ENCODE measurements at regions of chr10 and their contacts with region 1.

Region 1: GRCh38 chr10:119445311-119445934 is 97.1 kb downstream of the RGS10 start:
- DNase-seq: peak; percentile 93
- H3K4me3 ChIP-seq: no peak overlapping the region
- H3K27ac ChIP-seq: no peak overlapping the region
- H3K4me1 ChIP-seq: peaks cover 0 to 41% (median 27%) of the 10 kb centered on the region in 4 donors
- H3K27me3 ChIP-seq: no peaks in the 10 kb centered on the region
- CTCF ChIP-seq: peak; percentile 77 to 99 (median 90)
- EP300 ChIP-seq: no peak
- POLR2A ChIP-seq: no peak

Region 2: DNA sequence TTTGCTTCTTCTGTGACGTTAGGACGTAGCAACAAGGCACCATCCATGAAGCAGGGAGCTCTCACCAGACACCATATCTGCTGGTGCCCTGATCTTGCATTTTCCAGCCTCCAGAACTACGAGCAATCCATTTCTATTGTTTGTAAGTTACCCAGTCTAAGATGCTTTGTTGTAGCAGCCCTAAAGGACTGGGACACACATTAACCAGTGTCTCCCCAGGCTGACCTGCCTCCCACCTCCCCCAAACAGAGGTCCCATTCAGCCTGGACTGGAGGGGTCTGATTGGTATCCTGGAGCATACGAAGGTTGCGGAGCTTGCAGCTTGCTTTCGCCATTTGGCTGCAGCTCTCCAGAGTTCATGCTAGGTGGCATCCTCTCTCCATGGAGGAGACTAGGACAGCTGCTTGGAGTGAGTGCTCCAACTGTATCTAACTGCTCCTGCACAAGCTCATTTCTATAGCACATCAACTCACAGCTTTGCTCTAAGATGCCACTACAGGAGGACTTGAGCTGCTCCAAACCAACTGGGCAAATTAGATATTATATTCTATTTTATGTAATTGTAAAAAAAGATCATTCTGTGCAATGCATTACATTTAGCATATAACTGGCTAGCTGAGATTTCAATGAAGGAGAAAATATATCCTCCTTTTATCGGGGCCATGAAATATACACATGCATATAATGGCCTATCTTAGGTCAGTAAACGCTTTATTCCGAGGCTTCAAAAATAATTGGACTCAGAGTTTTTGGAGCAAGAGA is 246.0 kb before region 1 on chr10:
- intact Hi-C with region 1: loop called (anchors 1 kb)
- DNase-seq: peak; percentile 88
- H3K4me3 ChIP-seq: no peak overlapping the region
- H3K27ac ChIP-seq: no peak overlapping the region
- H3K4me1 ChIP-seq: peaks cover 0 to 3% (median 0%) of the 10 kb centered on the region in 4 donors
- H3K27me3 ChIP-seq: no peaks in the 10 kb centered on the region
- CTCF ChIP-seq: peak; percentile 68 to 83 (median 78)
- EP300 ChIP-seq: no peak
- POLR2A ChIP-seq: no peak

Region 3: DNA sequence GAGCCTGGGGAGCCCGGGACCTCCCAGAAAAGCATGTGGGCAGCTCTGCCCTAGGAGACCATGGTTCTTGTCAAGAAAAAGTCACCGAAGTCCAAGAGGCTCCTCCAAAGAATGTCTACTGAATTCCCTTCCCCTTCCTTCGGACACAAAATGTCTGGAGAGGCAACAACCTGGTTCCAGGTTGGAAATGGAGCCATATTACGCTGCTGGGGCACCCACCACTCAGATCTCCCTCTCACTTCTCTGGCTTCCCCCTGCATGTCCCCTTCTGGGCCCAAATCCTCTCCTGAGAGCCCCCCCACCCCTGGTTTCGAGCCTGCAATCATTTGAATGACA is 44.5 kb after region 1 on chr10:
- intact Hi-C with region 1: loop called (anchors 5 kb)
- DNase-seq: no peak
- H3K4me3 ChIP-seq: peak overlapping the region in 2 of 4 donors; percentile 39 to 40
- H3K27ac ChIP-seq: peak overlapping the region in 2 of 4 donors; percentile 22 to 25
- H3K4me1 ChIP-seq: peaks cover 0 to 26% (median 20%) of the 10 kb centered on the region in 4 donors
- H3K27me3 ChIP-seq: no peaks in the 10 kb centered on the region
- CTCF ChIP-seq: peak in 1 of 4 experiments; percentile 40
- EP300 ChIP-seq: no peak
- POLR2A ChIP-seq: no peak

Measured in sigmoid colon (tissue), 7 donors.